WTC11 (cell line): ENCODE measurements at regions of chr17 and their contacts with region 1.

Region 1: DNA sequence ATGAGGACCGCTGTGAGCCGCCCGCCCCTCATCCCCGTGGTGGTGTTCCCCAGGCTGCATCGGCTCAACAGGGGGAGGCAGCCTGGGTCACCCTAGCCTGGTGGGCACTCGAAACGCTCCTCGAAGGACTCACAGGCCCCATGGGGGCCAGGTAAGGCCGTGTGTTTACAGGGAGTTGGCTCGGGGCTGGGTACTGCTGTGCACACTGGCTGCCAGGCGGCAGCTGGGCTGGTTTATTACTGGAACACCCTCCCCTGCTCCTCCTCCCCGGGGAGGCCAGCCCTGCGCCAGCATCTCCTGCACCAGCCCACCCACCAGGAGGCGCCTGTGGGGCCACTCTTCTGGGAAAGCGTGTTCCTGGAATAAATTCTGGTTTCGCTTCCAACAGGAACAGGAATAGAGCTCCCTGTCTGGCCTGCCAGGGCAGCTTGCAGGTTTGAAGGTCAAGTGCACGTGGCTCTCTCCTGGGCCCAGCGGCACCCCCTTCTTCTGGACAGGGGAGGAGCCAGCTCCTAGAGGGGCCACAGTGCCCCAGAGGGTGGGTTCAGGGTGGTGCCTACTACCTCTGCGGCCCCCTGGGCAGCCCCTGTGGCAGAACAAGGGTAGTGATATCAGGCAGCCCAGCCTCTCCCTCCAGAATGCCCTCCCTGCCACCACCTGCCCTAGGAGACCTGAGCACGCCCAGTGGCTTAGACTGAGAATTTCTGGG is 11.3 kb downstream of the MCRIP1 start:
- DNase-seq: peak; percentile 68
- ATAC-seq: peak; percentile 44
- H3K4me3 Mint-ChIP-seq: no peak overlapping the region
- H3K27ac Mint-ChIP-seq: peak overlapping the region; percentile 27; the same call in 1 of the 2 replicates
- H3K4me1 Mint-ChIP-seq: peaks cover 5% of the 10 kb centered on the region
- H3K27me3 Mint-ChIP-seq: no peaks in the 10 kb centered on the region
- CTCF ChIP-seq: 0 out of 2 replicates have a peak, but pooled peaks have one; percentile 33

Region 2: DNA sequence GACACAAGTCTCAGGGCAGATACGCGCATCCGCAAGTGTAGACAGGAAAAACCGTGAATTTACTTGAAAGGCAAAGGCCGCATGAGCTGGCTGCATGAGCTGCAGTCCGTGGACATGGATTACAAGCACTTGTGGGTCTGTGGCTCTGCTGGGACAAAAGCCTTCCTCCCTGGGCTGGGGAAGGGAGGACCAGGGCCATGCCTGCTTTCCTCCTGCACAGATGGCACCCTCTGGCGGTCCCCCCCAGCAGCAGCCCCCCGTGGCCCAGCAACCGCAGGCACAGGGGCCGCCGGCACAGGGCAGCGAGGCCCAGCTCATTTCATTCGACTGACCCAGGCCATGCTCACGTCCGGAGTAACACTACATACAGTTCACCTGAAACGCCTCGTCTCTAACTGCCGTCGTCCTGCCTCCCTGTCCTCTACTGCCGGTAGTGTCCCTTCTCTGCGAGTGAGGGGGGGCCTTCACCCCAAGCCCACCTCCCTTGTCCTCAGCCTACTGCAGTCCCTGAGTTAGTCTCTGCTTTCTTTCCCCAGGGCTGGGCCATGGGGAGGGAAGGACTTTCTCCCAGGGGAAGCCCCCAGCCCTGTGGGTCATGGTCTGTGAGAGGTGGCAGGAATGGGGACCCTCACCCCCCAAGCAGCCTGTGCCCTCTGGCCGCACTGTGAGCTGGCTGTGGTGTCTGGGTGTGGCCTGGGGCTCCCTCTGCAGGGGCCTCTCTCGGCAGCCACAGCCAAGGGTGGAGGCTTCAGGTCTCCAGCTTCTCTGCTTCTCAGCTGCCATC is 120.3 kb before region 1 on chr17:
- CTCF ChIA-PET with region 1: no interaction called
- POLR2A ChIA-PET with region 1: no interaction called
- DNase-seq: no peak
- ATAC-seq: peak; percentile 9
- H3K4me3 Mint-ChIP-seq: peak overlapping the region; percentile 98
- H3K27ac Mint-ChIP-seq: peak overlapping the region; percentile 70; the same call in 1 of the 2 replicates
- H3K4me1 Mint-ChIP-seq: peaks cover 16% of the 10 kb centered on the region
- H3K27me3 Mint-ChIP-seq: no peaks in the 10 kb centered on the region
- CTCF ChIP-seq: no peak

Region 3: DNA sequence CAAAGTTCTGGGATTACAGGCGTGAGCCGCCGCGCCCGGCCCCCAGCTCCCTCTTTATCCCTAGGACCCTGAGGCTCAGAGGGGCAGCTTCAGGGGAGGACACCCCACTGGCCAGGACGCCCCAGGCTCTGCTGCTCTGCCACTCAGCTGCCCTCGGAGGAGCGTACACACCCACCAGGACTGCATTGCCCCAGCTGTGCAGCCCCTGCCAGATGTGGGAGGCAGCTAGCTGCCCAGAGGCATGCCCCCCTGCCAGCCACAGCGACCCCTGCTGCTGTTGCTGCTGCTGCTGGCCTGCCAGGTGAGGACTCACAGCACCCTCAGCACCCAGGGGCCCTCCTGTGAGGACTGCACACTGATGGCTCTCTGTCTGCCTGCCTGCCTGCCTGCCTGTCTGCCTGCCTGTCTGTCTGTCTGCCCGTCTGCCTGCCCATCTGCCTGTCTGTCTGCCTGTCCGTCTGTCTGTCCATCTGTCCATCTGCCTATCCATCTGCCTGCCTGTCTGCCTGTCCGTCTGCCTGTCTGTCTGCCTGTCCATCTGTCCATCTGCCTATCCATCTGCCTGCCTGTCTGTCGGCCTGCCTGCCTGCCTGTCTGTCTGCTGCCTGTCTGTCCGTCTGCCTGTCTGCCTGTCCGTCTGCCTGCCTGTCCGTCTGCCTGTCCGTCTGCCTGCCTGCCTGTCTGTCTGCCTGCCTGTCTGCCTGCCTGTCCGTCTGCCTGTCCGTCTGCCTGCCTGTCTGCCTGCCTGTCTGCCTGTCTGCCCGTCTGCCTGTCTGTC is 12.8 kb before region 1 on chr17:
- CTCF ChIA-PET with region 1: interaction called, 18 read pairs
- POLR2A ChIA-PET with region 1: no interaction called
- DNase-seq: no peak
- ATAC-seq: no peak
- H3K4me3 Mint-ChIP-seq: no peak overlapping the region
- H3K27ac Mint-ChIP-seq: no peak overlapping the region
- H3K4me1 Mint-ChIP-seq: no peaks in the 10 kb centered on the region
- H3K27me3 Mint-ChIP-seq: peaks cover 25% of the 10 kb centered on the region
- CTCF ChIP-seq: no peak